ENCODE measurements at regions of chr18 and their contacts with region 1.

Region 1: GRCh38 chr18:13381944-13382365 is 163.4 kb downstream of the LDLRAD4 start:
- DNase-seq: peak; percentile 76 to 82 (median 80)
- ATAC-seq: peak; percentile 72 to 84 (median 75)
- H3K4me3 ChIP-seq: peak overlapping the region in 9 of 12 donors; percentile 15 to 55 (median 39)
- H3K27ac ChIP-seq: peak overlapping the region; percentile 39 to 97 (median 80)
- H3K4me1 ChIP-seq: peaks cover 0 to 75% (median 59%) of the 10 kb centered on the region in 12 donors
- H3K27me3 ChIP-seq: no peaks in the 10 kb centered on the region
- CTCF ChIP-seq: no peak
- POLR2A ChIP-seq: no peak

Region 2: GRCh38 chr18:13318731-13319501 is 63.0 kb before region 1 on chr18:
- intact Hi-C with region 1: no loop called
- DNase-seq: no peak
- ATAC-seq: peak; percentile 23 to 78 (median 63)
- H3K4me3 ChIP-seq: no peak overlapping the region
- H3K27ac ChIP-seq: peak overlapping the region in 6 of 12 donors; percentile 22 to 61 (median 50)
- H3K4me1 ChIP-seq: peaks cover 0 to 28% (median 9%) of the 10 kb centered on the region in 12 donors
- H3K27me3 ChIP-seq: no peaks in the 10 kb centered on the region
- CTCF ChIP-seq: no peak
- POLR2A ChIP-seq: no peak

Region 3: DNA sequence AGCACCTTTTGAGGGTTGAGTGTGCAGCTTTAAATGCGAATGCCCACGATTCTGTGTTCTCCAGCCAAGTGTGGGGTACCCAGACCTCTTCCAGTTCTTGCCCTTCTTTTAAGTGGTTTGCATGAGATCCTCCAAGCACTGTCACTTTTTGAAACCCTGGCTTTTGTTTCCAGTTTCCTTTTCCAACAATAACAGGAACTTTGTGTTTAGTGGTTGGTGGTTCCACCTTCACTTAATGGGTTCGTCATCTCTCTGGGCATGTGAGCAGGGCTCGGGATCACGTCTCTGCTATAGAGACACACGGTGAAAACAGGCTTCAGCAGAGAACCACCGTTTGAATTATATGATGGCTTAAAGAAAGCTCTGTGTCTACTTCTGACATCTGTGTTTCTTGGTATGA is 34.3 kb after region 1 on chr18:
- intact Hi-C with region 1: loop called in 1 of 10 experiments (anchors 5 kb)
- DNase-seq: no peak
- ATAC-seq: peak; percentile 17 to 68 (median 34)
- H3K4me3 ChIP-seq: no peak overlapping the region
- H3K27ac ChIP-seq: peak overlapping the region in 9 of 12 donors; percentile 1 to 70 (median 50)
- H3K4me1 ChIP-seq: peaks cover 7 to 65% (median 46%) of the 10 kb centered on the region in 12 donors
- H3K27me3 ChIP-seq: no peaks in the 10 kb centered on the region
- CTCF ChIP-seq: no peak
- POLR2A ChIP-seq: no peak

Region 4: DNA sequence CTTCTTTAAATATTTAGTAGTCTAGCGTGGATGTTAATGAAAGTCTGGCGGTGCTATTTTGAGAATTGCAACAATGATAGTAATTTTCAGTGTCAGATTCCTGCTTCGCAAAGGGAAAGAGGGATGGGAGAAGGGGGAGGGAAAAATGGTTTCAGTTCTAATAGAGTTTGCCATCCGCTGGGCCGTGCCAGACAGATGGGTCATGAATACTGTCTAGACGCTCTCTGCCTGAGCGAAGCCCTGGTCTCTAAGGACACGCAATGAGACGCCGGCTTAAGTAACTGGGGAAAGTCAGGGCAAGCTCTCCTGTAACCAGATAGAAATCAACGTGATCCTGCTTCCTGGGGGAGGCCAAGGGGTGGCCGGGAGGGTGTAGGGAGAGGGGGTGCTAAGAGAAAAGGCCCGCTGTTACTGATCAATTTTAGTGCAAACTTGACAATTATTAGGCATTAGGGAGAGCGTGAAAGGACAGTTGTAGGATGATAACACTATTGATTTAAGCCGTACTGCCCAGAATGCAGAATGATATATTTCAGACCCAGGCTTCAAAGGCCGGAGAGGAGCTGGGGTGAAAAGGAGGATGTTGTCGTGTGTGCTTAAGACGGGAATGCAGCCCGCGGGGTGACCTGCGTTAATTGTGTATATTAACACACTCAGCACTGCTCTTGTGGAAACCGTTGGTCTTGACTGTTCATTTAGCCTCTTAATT is 65.8 kb after region 1 on chr18:
- intact Hi-C with region 1: loop called in 1 of 10 experiments (anchors 5 kb)
- DNase-seq: peak in 3 of 5 donors; percentile 49 to 63 (median 58)
- ATAC-seq: peak in 3 of 4 donors; percentile 31 to 59 (median 39)
- H3K4me3 ChIP-seq: peak overlapping the region in 2 of 12 donors; percentile 0 to 22
- H3K27ac ChIP-seq: peak overlapping the region in 3 of 12 donors; percentile 12 to 51 (median 32)
- H3K4me1 ChIP-seq: peaks cover 0 to 57% (median 27%) of the 10 kb centered on the region in 12 donors
- H3K27me3 ChIP-seq: no peaks in the 10 kb centered on the region
- CTCF ChIP-seq: no peak
- POLR2A ChIP-seq: no peak

Region 5: DNA sequence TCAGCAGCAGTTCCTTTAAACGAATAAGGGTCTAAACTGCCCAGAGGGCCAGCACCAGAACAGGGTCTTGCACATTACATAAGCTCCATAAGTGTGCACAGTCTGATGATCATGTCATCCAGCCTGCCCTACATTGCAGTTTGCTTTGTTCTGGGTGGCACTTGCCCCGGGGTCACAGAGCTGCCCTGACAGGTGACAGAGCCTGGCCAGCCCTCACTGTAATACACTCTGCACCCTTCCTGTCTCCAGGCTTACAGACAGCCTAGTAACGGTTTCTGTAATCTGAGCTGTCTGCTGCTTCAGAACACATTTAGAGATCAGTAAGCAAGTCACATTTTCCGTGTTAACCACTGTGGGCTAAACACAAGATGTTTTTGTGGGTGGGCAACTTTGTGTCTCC is 131.1 kb after region 1 on chr18:
- intact Hi-C with region 1: loop called in 2 of 10 experiments (anchors 10 kb)
- DNase-seq: peak in 1 of 5 donors; percentile 49
- ATAC-seq: peak; percentile 90 to 95 (median 93)
- H3K4me3 ChIP-seq: no peak overlapping the region
- H3K27ac ChIP-seq: peak overlapping the region in 4 of 12 donors; percentile 17 to 67 (median 51)
- H3K4me1 ChIP-seq: peaks cover 0 to 34% (median 11%) of the 10 kb centered on the region in 12 donors
- H3K27me3 ChIP-seq: no peaks in the 10 kb centered on the region
- CTCF ChIP-seq: no peak
- POLR2A ChIP-seq: no peak

Measured in heart left ventricle (tissue), 16 donors.